Activated CD4-positive, alpha-beta T cell treated with anti-CD3 and anti-CD28 coated beads for 36 hours (primary cell): ENCODE measurements at regions of chr22 and their contacts with region 1.

Region 1: DNA sequence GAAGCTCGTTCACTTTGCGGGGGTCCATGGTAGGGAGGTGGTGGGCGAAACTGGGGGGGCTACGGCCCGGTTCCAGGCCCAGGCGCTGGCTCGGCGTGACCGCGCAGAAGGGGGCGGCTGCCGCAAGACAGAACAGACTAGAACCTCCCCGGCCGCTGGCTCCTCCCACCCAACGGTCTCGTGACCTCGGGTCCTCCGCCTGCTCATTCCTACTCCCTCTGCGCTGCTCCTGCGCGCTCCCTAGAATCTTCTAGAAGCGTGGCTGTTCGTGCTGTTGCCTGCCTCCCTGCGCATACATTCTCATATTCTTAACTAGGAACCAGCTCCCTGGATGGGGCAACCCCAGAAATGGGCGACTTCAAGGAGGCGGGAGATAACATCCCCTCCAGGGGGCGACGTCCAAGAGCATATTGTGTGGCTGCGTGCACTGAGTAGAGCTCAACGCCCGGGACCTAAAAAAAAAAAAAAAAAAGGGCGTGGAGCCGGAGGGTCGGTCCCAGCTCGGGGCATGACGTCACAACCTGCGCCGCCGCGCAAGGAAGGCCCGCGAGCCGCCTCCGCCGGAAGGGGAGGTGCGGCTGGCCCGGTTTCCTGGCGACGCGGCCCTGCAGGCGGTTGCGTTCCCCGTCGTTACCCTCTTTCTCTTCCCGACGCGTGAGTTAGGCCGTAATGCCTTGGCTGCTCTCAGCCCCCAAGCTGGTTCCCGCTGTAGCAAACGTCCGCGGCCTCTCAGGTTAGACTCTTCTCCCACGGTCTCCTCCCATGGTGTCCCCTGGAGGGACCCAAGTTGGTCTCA is at the starts of genes ST13 and XPNPEP3:
- DNase-seq: peak; percentile 98
- ATAC-seq: peak; percentile 96
- H3K4me3 Mint-ChIP-seq: peak within 1 kb of the TSS; percentile 97
- H3K27ac Mint-ChIP-seq: peak within 1 kb of the TSS; percentile 99
- H3K4me1 Mint-ChIP-seq: peaks cover 53% of the 10 kb centered on the region
- H3K27me3 Mint-ChIP-seq: no peaks in the 10 kb centered on the region
- total RNA-seq, gene ST13: 260 to 297 TPM
- total RNA-seq, gene XPNPEP3: 21.5 to 25.8 TPM

Region 2: DNA sequence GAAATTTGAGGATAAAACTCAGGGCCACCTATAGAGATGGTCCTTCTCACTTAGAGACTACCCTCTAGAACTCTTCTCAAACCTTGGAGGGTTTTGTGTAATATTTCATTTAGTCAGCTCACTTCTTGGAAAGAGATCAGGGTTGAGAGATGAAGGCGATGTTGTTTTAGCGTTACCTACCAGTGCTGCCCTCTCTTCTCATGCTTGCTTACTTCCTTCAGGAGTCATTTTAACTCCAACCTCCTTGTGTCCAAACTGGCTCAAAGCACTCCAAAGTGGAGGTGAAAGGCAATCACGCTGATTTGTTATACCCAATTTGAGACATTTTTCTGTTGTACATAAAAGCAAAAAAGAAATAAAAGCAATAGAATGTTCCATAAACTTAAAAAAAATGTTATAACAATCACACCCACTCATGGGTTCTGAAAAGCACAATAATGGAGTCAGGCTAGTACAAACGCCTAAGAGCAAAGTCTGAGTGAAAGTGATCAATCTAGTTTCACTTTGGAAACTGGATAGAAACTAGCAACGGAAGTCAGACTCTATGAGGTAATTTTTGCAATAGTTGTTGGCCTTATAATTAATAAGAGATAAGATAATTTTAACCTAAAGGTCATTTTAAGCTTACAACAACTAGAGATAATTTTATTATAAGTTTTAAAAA is 337.3 kb before region 1 on chr22:
- CTCF ChIA-PET with region 1: no interaction called
- POLR2A ChIA-PET with region 1: no interaction called
- intact Hi-C with region 1: no loop called
- DNase-seq: peak; percentile 19
- ATAC-seq: peak; percentile 93
- H3K4me3 Mint-ChIP-seq: peak overlapping the region; percentile 62
- H3K27ac Mint-ChIP-seq: peak overlapping the region; percentile 97
- H3K4me1 Mint-ChIP-seq: peaks cover 38% of the 10 kb centered on the region
- H3K27me3 Mint-ChIP-seq: no peaks in the 10 kb centered on the region

Region 3: GRCh38 chr22:40636380-40637182 is 220.1 kb before region 1 on chr22 and contains the start of gene MRTFA:
- CTCF ChIA-PET with region 1: no interaction called
- POLR2A ChIA-PET with region 1: no interaction called
- intact Hi-C with region 1: loop called in 1 of 2 experiments (anchors 1 kb)
- DNase-seq: peak; percentile 100
- ATAC-seq: peak; percentile 96
- H3K4me3 Mint-ChIP-seq: peak within 1 kb of the TSS; percentile 85
- H3K27ac Mint-ChIP-seq: peak within 1 kb of the TSS; percentile 93
- H3K4me1 Mint-ChIP-seq: peaks cover 43% of the 10 kb centered on the region
- H3K27me3 Mint-ChIP-seq: no peaks in the 10 kb centered on the region
- total RNA-seq, gene MRTFA: 41.0 to 43.2 TPM

Region 4: DNA sequence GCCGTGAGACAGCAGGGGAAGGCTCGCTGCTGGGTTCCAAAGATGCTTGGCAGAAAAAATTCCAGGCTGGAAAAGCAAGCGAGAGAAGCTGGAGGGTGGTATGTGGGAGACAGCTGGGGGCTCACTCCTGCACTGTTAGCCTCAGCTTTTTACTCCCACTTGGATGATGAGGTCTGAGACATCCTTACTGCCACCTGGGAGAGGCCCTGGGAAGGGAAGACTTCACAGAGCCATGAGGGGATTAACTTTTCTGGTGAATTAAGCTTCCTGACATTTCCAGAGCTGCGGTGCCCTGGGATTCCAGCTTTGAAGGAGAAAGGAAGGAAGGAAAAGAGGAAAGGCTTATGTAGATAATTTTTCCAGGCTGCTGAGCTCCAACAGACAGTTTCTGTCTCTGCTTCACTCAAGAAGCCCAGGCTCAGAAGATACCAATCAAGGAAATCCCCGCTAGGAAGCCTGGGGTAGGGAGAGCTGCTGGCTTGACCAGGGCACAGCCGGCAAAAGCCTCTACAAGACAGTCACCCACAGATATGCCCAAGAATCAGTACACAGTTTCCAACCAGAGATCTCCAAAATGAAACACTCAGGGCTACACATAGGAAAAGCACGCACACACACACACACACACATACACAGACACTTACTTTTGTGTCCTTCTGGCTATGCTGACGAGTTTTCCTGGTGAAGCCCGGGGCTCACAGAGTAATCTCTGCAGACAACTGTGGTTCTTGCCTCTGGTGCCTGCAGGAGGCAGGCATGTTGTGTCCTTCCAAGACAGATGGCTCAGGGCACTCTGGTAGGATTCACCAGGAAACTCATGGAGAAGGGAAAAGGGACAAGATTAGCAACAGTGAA is 176.5 kb before region 1 on chr22:
- CTCF ChIA-PET with region 1: interaction called, 11 read pairs
- POLR2A ChIA-PET with region 1: interaction called, 8 read pairs
- intact Hi-C with region 1: loop called (anchors 1 kb)
- DNase-seq: no peak
- ATAC-seq: no peak
- H3K4me3 Mint-ChIP-seq: no peak overlapping the region
- H3K27ac Mint-ChIP-seq: no peak overlapping the region
- H3K4me1 Mint-ChIP-seq: peaks cover 22% of the 10 kb centered on the region
- H3K27me3 Mint-ChIP-seq: peaks cover 10% of the 10 kb centered on the region

Region 5: DNA sequence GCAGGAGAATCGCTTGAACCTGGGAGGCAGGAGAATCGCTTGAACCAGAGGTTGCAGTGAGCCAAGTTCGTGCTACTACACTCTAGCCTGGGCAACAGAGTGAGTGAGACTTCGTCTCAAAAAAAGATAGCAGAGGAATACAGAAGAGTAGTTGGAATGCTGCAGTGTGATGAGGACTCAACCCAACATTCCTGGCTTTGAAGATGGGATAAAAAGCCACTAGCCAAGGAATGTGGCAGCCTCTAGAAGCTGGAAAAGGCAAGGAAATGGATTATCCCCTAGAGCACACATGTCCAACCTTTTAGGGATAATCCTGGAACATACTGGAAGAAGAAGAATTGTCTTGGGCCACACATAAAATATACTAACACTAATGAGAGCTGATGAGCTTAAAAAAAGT is 51.5 kb before region 1 on chr22:
- CTCF ChIA-PET with region 1: no interaction called
- POLR2A ChIA-PET with region 1: no interaction called
- intact Hi-C with region 1: no loop called
- DNase-seq: no peak
- ATAC-seq: no peak
- H3K4me3 Mint-ChIP-seq: no peak overlapping the region
- H3K27ac Mint-ChIP-seq: no peak overlapping the region
- H3K4me1 Mint-ChIP-seq: peaks cover 12% of the 10 kb centered on the region
- H3K27me3 Mint-ChIP-seq: no peaks in the 10 kb centered on the region

Region 6: GRCh38 chr22:40898850-40899357 is 42.2 kb after region 1 on chr22:
- CTCF ChIA-PET with region 1: interaction called, 9 read pairs
- POLR2A ChIA-PET with region 1: interaction called, 5 read pairs
- intact Hi-C with region 1: loop called (anchors 1 to 5 kb)
- DNase-seq: peak; percentile 38
- ATAC-seq: peak; percentile 94
- H3K4me3 Mint-ChIP-seq: peak overlapping the region; percentile 15
- H3K27ac Mint-ChIP-seq: peak overlapping the region; percentile 81
- H3K4me1 Mint-ChIP-seq: peaks cover 14% of the 10 kb centered on the region
- H3K27me3 Mint-ChIP-seq: no peaks in the 10 kb centered on the region

Region 7: GRCh38 chr22:41132550-41132949 is 275.8 kb after region 1 on chr22:
- CTCF ChIA-PET with region 1: no interaction called
- POLR2A ChIA-PET with region 1: no interaction called
- intact Hi-C with region 1: no loop called
- DNase-seq: no peak
- ATAC-seq: no peak
- H3K4me3 Mint-ChIP-seq: no peak overlapping the region
- H3K27ac Mint-ChIP-seq: no peak overlapping the region
- H3K4me1 Mint-ChIP-seq: no peaks in the 10 kb centered on the region
- H3K27me3 Mint-ChIP-seq: no peaks in the 10 kb centered on the region

Region 8: DNA sequence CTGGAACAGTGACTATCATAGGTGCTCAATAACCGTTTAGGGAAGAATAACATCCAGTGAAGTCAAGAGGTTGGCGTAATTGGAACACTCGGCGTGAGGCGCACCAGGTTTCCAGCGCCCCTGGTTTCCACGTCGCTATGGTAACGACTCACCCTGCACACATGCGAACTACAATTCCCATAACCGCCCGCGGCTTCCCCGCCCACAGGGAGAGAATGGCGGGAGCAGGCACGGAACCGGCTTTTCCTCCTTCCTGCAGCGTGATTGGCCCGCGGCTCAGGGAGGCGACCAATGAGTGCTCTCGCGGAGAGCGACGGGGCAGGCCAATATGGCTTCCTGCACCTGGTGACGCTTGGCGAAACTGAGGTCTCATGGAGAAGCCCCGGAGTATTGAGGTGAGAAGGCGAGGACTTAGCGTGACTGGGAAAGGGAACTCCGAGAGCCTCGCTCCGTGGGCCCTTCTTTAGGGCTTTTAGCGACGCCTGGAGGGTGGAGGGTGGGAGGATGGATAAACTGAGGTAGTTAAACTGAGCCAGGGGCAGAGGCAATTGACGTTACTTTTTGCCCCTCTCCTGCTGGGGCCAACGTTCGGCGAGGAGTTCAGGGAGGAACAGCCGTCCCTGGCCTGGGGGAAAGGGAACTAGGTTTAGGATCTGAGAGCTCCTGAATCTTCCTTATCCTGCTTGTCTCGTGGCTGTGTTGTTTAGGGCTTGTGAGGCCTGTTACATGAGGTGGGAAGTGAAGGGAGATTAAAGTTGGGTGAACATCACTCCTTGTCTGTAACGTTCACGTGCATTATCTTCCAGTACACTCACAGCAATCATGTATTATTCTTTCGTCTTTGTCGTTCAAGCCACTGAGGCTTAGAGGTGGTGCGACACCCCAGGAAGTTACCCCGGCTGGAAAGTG is 348.5 kb after region 1 on chr22 and contains the start of gene L3MBTL2:
- CTCF ChIA-PET with region 1: no interaction called
- POLR2A ChIA-PET with region 1: no interaction called
- intact Hi-C with region 1: loop called in 1 of 2 experiments (anchors 1 kb)
- DNase-seq: peak; percentile 100
- ATAC-seq: peak; percentile 100
- H3K4me3 Mint-ChIP-seq: peak within 1 kb of the TSS; percentile 86
- H3K27ac Mint-ChIP-seq: peak within 1 kb of the TSS; percentile 89
- H3K4me1 Mint-ChIP-seq: peaks cover 20% of the 10 kb centered on the region
- H3K27me3 Mint-ChIP-seq: peaks cover 10% of the 10 kb centered on the region
- total RNA-seq, gene L3MBTL2: 24.4 to 25.1 TPM

Region 9: GRCh38 chr22:41468381-41469217 is 611.9 kb after region 1 on chr22 and contains the starts of genes ACO2 and PHF5A:
- CTCF ChIA-PET with region 1: no interaction called
- POLR2A ChIA-PET with region 1: interaction called, 3 read pairs
- intact Hi-C with region 1: loop called in 1 of 2 experiments (anchors 5 kb)
- DNase-seq: peak; percentile 98
- ATAC-seq: peak; percentile 94
- H3K4me3 Mint-ChIP-seq: peak within 1 kb of the TSS; percentile 90
- H3K27ac Mint-ChIP-seq: peak within 1 kb of the TSS; percentile 99
- H3K4me1 Mint-ChIP-seq: peaks cover 47% of the 10 kb centered on the region
- H3K27me3 Mint-ChIP-seq: no peaks in the 10 kb centered on the region
- total RNA-seq, gene ACO2: 95.4 to 106 TPM
- total RNA-seq, gene PHF5A: 54.5 to 61.1 TPM